Panc1 (cell line): ENCODE measurements at regions of chr3 and their contacts with region 1.

Region 1: DNA sequence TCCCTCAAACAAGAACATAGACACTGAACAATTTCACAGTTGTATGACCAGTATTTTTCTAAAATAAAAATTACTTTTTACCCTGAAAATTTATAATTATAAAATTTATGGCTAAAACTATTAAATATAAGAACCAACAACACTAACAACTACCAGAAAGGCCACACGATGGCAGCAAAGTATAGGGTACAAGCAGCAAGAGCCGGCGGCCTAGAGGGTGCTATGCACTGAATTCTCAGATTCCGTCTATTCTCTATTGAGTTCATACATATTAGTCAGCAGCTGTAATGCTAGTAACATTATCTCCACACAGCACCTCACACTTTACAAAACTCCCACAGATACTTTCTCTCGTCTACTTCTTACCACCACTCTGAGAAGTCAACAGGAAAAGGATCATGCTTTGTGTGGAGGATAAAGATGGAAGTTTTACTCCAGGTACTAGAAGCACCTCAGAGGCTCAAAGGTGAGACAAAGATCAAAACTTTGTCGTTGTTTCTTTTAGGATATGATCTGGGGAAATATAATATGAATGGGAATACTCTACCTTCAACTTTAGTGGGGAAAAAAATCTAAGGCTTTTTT is 160.5 kb downstream of the FGF12 start:
- DNase-seq: peak; percentile 46
- ATAC-seq: peak; percentile 93
- H3K4me3 ChIP-seq: no peak overlapping the region
- H3K27ac ChIP-seq: no peak overlapping the region
- H3K4me1 ChIP-seq: peaks cover 5% of the 10 kb centered on the region; the same call in 1 of the 2 replicates
- H3K27me3 ChIP-seq: peaks cover 2% of the 10 kb centered on the region; the same call in 1 of the 2 replicates
- CTCF ChIP-seq: peak; percentile 87

Region 2: DNA sequence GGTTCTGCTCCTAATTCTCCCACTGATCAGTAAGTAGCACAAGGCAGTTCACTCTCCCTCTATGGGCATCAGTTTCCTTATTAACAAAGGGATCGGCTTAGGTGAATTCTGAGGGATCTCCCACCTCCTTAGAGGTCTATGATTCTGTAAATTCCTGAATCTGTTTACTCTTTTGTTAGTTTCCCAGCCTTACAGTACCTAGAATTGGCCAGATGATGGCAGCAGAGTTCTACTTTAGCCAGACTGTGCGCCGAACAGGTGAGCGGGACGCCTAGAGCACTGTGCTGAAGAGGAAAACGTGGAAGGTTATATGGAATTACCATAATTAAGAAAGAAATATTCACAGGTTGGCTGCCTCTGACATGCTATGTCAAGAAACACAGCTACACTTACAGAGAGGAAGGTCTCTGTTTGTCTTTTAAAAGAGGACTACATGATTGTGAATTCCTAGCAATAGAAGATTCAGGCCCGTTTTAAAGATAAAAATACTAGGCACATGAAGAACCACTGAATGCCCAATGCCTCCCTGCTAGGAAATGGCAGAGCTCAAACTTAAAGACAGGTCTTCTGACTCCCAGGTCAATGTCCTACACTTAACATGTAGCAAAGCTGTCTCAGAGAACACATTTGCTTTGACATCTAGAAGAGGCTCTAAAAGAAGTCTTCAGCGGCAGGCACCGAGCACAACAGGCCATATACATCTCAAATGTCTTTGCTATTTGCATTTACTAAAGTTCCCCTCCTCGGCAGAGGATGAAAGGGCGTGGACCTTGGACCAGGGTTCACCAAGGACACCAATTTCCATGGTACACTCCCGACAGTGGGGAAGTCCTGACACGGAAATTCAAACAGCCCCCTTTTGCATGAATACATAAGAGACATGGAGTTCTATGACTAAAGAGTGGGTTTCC is 99.3 kb before region 1 on chr3:
- CTCF ChIA-PET with region 1: no interaction called
- POLR2A ChIA-PET with region 1: no interaction called
- in situ Hi-C with region 1: no loop called
- intact Hi-C with region 1: loop called (anchors 1 kb)
- DNase-seq: peak; percentile 33
- ATAC-seq: peak; percentile 91
- H3K4me3 ChIP-seq: no peak overlapping the region
- H3K27ac ChIP-seq: no peak overlapping the region
- H3K4me1 ChIP-seq: peaks cover 3% of the 10 kb centered on the region; the same call in 1 of the 2 replicates
- H3K27me3 ChIP-seq: peaks cover 20% of the 10 kb centered on the region
- CTCF ChIP-seq: peak; percentile 92

Region 3: DNA sequence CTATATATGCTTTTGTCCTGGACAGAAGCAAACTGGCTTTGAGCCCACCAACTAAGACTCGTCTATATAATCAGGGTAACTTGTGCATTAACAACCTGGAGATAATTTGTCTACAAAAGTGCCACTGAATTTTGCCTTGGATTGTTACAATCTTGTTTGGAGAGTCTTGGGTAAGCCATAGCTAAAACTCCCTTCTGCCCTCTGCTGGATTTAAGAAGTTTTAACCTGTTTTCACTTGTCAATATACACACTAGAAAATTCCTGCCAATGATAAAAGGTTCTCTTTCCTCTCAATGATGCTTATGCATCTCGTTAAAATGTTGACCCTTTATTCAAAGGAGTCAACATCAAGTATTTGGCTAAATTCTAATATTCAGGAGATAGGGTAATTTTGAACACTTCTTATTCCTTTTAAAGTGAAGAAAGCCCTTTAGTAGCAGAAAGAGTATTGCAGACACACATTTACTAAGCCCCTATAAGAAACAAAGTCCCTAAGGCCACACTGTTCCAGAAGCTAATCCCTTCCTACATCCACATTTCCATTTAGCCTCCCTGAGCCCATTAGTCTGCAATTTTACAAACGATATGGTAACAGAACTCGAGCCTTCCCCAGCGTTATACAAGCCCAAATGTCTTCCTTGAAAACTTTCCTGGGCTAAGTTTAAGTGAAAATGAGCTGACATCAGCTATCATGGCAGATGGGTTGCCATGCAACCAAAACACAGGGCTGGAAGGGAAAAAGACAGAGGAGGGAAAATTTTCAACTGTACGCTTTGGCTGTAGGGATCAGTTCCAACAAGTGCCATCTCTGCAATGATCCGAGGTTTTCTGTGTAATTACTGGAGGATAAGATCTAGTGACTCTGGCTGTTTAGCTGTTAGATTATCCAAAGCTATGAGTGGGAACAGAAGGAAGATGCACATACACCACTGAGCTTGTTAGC is 236.4 kb after region 1 on chr3:
- CTCF ChIA-PET with region 1: interaction called, 3 read pairs
- POLR2A ChIA-PET with region 1: no interaction called
- in situ Hi-C with region 1: no loop called
- intact Hi-C with region 1: loop called (anchors 1 kb)
- DNase-seq: no peak
- ATAC-seq: peak; percentile 83
- H3K4me3 ChIP-seq: no peak overlapping the region
- H3K27ac ChIP-seq: no peak overlapping the region
- H3K4me1 ChIP-seq: no peaks in the 10 kb centered on the region
- H3K27me3 ChIP-seq: no peaks in the 10 kb centered on the region
- CTCF ChIP-seq: peak; percentile 76; the same call in 1 of the 2 replicates

Region 4: DNA sequence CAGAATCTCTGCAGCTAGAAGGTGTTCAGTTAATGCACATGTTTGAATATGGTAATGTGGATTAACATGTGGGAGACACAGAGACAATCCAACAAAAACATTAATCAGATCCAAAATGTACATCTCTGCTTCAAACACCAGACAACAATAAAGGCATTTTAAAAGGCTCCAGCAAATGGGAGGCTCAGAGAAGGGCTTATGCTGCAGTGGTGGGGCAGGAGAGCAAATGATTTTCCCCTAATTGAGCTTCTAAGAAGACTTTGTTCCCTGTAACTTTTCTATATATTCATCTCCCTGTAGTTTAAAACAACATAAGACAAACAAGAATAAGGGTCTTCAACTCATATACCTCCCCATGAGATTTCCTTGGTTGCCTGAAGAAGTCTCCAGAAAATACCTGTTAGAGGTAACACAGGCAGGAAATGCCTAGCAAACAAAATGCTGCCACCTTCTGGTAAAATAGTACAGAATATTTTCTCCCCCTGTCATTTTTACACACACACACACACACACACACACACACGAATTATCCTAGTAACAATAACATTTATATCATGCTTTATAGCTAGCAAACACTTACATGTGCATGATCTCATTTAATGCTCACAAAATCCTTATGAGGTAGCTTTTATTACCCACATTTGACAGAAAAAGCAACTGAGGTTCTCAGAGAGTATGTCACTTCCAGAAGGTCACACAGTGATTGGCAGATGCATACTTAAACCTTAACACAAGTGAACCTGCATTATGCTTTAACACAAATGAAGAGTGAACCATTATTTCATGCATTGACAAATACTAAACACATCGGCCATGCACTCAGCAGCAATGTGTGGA is 474.3 kb after region 1 on chr3:
- CTCF ChIA-PET with region 1: no interaction called
- POLR2A ChIA-PET with region 1: no interaction called
- in situ Hi-C with region 1: no loop called
- intact Hi-C with region 1: loop called (anchors 5 kb)
- DNase-seq: peak; percentile 13
- ATAC-seq: peak; percentile 77
- H3K4me3 ChIP-seq: no peak overlapping the region
- H3K27ac ChIP-seq: no peak overlapping the region
- H3K4me1 ChIP-seq: no peaks in the 10 kb centered on the region
- H3K27me3 ChIP-seq: no peaks in the 10 kb centered on the region; the same call in 1 of the 2 replicates
- CTCF ChIP-seq: peak; percentile 70; the same call in 1 of the 2 replicates